ENCODE measurements at regions of chr9 and their contacts with region 1.

Region 1: GRCh38 chr9:97501177-97501971 is at the start of gene TMOD1:
- DNase-seq: peak; percentile 82
- ATAC-seq: peak; percentile 82
- total RNA-seq, gene TMOD1: 192 TPM

Region 2: GRCh38 chr9:97559111-97559514 is 57.7 kb after region 1 on chr9:
- intact Hi-C with region 1: loop called (anchors 10 kb)
- DNase-seq: no peak
- ATAC-seq: no peak

Region 3: DNA sequence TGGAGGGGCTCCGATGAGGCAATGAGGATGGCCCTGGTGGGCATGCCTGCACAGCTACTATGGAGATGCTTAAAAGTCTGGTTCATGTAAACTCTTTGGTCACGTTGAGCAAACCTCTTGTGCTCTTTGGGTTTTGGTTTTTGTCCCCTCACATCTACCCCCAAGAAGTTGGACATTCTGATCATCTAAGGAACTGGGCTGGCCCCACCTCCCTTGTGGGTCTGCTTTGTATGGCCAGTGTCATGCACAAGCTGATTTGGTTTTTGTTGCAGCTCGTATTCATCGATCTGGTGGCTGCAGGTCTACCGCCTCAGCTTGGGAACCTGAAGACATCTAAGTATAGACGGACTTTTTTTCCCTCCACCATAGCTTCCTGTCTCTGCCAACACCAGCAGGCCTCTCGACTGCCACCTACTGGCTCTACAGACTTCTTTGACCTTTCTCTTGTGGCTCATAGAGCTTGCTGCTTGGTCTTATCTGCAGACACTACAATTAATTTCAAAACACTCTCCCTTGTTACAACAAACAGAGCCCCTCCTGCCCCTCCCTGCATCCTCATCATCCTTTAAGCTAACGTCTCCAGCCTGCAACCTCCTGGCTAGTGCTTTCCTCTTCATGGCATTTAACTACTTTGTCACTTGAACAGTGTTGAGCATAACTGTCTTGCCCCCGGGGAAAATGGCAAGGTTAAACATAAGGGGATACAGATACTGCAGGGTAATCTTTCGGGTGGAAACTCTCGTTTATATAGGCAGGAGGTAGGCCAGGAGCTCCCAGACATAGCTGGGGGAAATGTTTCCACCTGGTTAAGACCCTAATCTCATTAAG is 97.3 kb after region 1 on chr9:
- intact Hi-C with region 1: loop called (anchors 10 kb)
- DNase-seq: peak; percentile 72
- ATAC-seq: peak; percentile 67